ENCODE measurements at regions of chr10 and their contacts with region 1.

Region 1: GRCh38 chr10:73785221-73785720 is at the start of gene ZSWIM8:
- DNase-seq: peak; percentile 81 to 96
- H3K4me3 ChIP-seq: peak within 1 kb of the TSS; percentile 89 to 92
- H3K27ac ChIP-seq: peak within 1 kb of the TSS; percentile 88 to 92
- H3K4me1 ChIP-seq: peaks cover 15 to 35% of the 10 kb centered on the region in 2 donors
- H3K27me3 ChIP-seq: no peaks in the 10 kb centered on the region
- CTCF ChIP-seq: no peak
- total RNA-seq, gene ZSWIM8: 106 TPM

Region 2: GRCh38 chr10:73772280-73773151 is 12.8 kb before region 1 on chr10:
- intact Hi-C with region 1: loop called (anchors 1 kb)
- DNase-seq: peak; percentile 45 to 93
- H3K4me3 ChIP-seq: peak overlapping the region; percentile 76 to 91
- H3K27ac ChIP-seq: peak overlapping the region; percentile 95 to 99
- H3K4me1 ChIP-seq: peaks cover 11 to 23% of the 10 kb centered on the region in 2 donors
- H3K27me3 ChIP-seq: no peaks in the 10 kb centered on the region
- CTCF ChIP-seq: peak in 2 of 3 experiments; percentile 2 to 24

Region 3: GRCh38 chr10:74165530-74165901 is 380.2 kb after region 1 on chr10:
- intact Hi-C with region 1: no loop called
- DNase-seq: no peak
- H3K4me3 ChIP-seq: no peak overlapping the region
- H3K27ac ChIP-seq: no peak overlapping the region
- H3K4me1 ChIP-seq: peaks cover 0 to 3% of the 10 kb centered on the region in 2 donors
- H3K27me3 ChIP-seq: no peaks in the 10 kb centered on the region
- CTCF ChIP-seq: no peak